ENCODE measurements at regions of chr3 and their contacts with region 1.

Region 1: DNA sequence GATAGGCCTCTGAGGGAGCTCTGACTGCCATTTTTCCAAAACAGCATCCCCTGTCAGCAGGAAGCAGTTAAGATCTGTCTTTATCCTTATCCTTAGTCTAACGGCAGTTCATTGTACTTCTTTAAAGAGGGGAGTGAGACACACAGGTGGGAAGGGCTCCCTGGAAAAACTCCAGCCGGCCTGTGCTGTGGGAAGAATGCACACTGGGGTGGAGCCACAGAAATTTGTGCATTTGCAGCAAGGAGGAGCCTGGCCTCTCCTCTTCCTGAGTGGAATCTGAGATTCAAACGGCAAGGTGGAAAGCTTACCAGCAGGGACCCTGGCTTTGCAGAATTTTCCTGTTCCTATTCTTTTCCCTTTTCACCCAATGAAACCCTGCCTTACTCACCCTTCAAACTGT is 1209.4 kb downstream of the ROBO2 start:
- DNase-seq: no peak

Region 2: GRCh38 chr3:76826861-76827260 is 1422.4 kb before region 1 on chr3:
- intact Hi-C with region 1: no loop called
- DNase-seq: no peak

Region 3: DNA sequence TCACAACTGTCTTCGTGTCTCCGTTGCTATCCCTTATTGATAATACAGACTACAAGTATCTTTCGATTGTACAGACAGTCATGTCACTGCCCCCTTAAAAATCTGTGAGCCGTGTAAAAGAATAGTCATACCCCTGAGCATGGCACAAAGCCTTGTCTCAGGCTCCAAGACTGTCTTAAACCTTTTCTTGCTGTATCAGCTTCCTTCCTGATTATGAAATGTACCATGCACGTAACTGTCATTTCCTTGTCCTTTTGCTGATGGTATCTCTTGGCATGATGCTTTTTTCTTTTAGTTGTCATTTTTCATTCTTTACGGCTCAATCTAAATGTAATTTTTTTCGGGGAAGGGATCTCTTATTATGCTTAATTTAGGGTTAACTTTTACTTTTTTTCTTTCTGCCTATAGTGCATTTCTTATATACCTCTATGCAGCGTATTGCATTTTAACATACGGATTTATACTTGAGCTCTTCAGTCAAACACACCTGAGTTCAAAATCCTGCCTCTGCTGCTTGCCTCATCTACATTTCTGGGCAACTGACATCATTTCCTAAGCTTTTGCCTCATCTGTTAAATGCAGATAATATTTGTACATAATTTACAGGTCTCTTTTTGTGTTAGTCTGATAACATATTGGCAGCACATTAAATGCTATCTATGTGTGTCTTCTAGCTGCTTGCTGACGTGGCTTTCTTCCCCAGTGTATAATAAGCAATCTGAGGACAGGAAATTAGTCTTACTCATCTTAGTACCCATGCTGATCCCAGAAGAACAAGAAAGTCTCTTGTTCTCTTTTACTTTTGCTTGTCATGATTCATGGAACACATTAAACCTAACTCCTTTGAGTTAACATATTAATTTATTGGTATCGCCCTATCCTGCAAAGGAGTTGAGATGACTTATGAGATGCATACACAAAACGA is 1152.1 kb before region 1 on chr3:
- intact Hi-C with region 1: no loop called
- DNase-seq: no peak

Region 4: GRCh38 chr3:78274475-78275065 is 25.3 kb after region 1 on chr3:
- intact Hi-C with region 1: loop called in 1 of 2 experiments (anchors 2 kb)
- DNase-seq: no peak

Measured in posterior vena cava (tissue), 2 donors.